OCI-LY7 (cell line): ENCODE measurements at regions of chr11 and their contacts with region 1.

Region 1: DNA sequence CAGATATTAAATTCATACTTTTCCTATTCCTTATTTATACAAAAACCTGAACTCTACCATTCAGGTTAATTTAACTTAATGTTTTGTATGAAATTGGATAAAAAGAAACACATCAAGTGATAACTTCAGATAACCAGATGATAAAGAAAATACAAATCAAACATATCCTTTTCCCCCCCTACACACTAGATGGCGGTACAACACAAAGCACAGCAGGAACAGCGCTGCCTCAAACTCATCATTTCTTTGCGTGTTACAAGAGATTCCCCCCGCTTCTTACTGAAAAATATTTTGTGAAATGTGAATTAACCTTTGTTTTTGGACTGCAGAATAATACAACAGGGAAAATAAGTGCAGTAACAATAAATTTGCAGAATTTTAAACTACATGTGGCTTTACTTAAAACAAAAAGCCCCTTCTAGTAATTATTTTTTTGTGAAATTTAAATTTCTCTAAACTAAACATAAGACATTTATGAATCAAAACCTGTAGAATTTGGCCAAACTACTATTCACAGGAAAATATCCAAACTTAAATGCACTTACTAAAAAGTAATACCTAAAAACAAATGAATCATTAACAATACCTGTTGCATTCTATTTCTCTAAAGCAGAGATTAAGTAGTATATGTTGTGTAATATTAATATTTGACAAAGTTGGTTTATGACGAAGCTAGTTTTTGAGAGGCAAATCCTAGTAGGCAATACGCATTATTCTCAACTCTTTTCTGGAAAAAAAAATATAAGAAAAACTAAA is 74.4 kb downstream of the ARHGAP32 start:
- DNase-seq: peak; percentile 45
- H3K4me3 ChIP-seq: no peak overlapping the region
- H3K27ac ChIP-seq: no peak overlapping the region
- H3K4me1 ChIP-seq: no peaks in the 10 kb centered on the region
- CTCF ChIP-seq: peak; percentile 96

Region 2: DNA sequence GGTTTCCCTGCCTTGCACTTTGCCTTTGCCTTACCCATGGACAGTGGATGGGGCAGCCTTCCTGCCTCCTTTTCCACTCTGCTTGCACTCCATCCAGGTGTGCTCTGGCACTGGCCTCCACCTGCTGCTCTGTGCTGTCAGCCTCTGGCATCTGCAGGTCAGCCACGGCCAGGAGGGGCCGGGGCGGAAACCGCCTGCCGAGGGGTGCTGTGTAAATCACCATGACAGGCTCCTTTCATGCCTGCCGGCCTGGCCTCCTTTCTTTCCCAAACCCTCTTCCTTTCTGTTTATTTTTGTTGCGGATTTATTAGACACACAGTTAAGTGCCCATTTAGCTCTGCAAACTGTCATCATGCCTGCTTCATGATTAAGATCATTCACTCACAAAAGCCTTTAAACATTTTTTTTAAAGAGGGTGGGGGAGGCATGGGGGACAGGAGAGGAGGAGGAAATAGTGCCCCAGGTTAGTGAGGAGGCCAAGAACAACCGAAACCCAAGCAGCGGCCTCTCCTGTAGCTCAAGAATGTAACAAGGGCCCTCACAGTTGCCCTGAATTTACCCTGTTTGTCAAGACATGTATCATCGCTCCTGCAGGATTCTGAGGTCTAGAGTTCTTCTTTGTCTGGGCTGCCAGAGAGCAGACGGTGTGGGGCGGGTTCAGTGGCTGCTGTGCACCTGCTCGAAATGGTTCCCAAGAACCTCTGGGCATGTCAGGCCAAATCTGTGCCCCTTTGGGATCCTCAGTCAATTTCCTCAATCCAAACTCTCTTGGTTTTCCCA is 341.2 kb after region 1 on chr11:
- CTCF ChIA-PET with region 1: no interaction called
- POLR2A ChIA-PET with region 1: no interaction called
- intact Hi-C with region 1: no loop called
- DNase-seq: no peak
- H3K4me3 ChIP-seq: no peak overlapping the region
- H3K27ac ChIP-seq: no peak overlapping the region
- H3K4me1 ChIP-seq: no peaks in the 10 kb centered on the region
- CTCF ChIP-seq: no peak

Region 3: GRCh38 chr11:129750349-129751292 is 632.8 kb after region 1 on chr11:
- CTCF ChIA-PET with region 1: no interaction called
- POLR2A ChIA-PET with region 1: no interaction called
- intact Hi-C with region 1: loop called (anchors 5 kb)
- DNase-seq: peak; percentile 75
- H3K4me3 ChIP-seq: no peak overlapping the region
- H3K27ac ChIP-seq: no peak overlapping the region
- H3K4me1 ChIP-seq: no peaks in the 10 kb centered on the region
- CTCF ChIP-seq: peak; percentile 93